Mammary epithelial cell (primary cell): ENCODE measurements at regions of chr15 and their contacts with region 1.

Region 1: GRCh38 chr15:70097337-70098169 is at the start of gene TLE3:
- DNase-seq: peak; percentile 98
- H3K4me3 ChIP-seq: peak within 1 kb of the TSS; percentile 64 to 98 (median 70)
- H3K27ac ChIP-seq: peak within 1 kb of the TSS; percentile 81
- H3K4me1 ChIP-seq: peaks cover 41% of the 10 kb centered on the region
- H3K27me3 ChIP-seq: peaks cover 8% of the 10 kb centered on the region
- CTCF ChIP-seq: peak; percentile 2 to 43
- total RNA-seq, gene TLE3: 27.6 to 32.0 TPM

Region 2: DNA sequence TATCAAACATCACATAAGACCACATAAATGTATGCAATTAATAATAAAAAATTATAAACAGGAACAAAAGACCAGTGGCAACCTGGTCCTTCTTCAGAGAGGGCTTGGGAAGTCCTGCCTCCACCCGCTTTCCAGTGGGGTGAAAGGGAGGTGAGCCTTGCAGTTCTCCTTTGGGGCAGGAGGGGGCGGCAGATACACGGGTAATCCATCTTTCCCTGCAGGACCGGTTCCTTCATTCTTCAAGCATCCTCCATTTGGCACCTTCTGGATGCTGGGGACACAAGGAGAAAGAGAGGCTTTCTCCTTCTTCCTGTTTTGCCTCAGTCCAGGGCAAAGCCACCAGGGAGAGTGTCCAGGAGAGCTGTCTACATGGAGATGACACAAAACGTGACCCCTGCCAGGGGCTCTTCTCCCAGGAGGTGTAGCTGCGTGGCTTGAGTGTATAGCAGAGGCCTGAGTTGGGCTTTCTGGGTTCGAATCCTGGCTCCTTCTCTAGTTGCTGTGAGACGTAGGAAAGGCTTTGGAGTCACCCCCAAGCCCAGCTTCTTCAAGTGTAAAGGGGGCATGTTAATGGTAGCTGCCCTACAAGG is 621.7 kb before region 1 on chr15:
- CTCF ChIA-PET with region 1: no interaction called
- dilution Hi-C with region 1: no loop called
- in situ Hi-C with region 1: no loop called
- intact Hi-C with region 1: loop called (anchors 2 kb)
- DNase-seq: peak; percentile 65
- H3K4me3 ChIP-seq: no peak overlapping the region
- H3K27ac ChIP-seq: no peak overlapping the region
- H3K4me1 ChIP-seq: peaks cover 5% of the 10 kb centered on the region
- H3K27me3 ChIP-seq: no peaks in the 10 kb centered on the region
- CTCF ChIP-seq: peak; percentile 98

Region 3: DNA sequence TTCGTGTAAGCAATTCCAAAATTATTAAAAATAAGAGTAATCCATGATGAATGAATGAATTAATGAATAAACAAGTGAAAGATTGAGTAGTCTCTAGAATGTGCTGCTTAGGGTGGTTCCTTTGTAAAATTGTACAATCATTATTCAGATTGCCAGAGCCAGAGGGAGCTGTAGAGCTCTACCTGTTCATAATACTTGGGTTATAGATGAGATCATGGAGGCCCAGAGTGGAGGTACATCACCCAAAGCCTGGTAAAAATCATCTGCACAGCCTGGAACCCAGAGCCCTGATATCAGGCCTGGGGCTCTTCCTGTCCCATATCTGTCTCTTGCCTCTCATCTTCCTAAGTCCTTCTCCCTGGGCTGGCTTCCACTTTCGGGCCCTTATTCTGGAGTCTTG is 347.8 kb before region 1 on chr15:
- CTCF ChIA-PET with region 1: interaction called, 5 read pairs
- dilution Hi-C with region 1: no loop called
- in situ Hi-C with region 1: no loop called
- intact Hi-C with region 1: loop called (anchors 1 kb)
- DNase-seq: peak; percentile 8
- H3K4me3 ChIP-seq: no peak overlapping the region
- H3K27ac ChIP-seq: no peak overlapping the region
- H3K4me1 ChIP-seq: no peaks in the 10 kb centered on the region
- H3K27me3 ChIP-seq: peaks cover 2% of the 10 kb centered on the region
- CTCF ChIP-seq: peak; percentile 31 to 53

Region 4: GRCh38 chr15:70196314-70197291 is 99.0 kb after region 1 on chr15:
- CTCF ChIA-PET with region 1: no interaction called
- dilution Hi-C with region 1: loop called (anchors 5 kb)
- in situ Hi-C with region 1: no loop called
- intact Hi-C with region 1: loop called (anchors 1 kb)
- DNase-seq: peak; percentile 100
- H3K4me3 ChIP-seq: no peak overlapping the region
- H3K27ac ChIP-seq: peak overlapping the region; percentile 90
- H3K4me1 ChIP-seq: peaks cover 33% of the 10 kb centered on the region
- H3K27me3 ChIP-seq: no peaks in the 10 kb centered on the region
- CTCF ChIP-seq: peak in 1 of 2 donors; percentile 26

Region 5: DNA sequence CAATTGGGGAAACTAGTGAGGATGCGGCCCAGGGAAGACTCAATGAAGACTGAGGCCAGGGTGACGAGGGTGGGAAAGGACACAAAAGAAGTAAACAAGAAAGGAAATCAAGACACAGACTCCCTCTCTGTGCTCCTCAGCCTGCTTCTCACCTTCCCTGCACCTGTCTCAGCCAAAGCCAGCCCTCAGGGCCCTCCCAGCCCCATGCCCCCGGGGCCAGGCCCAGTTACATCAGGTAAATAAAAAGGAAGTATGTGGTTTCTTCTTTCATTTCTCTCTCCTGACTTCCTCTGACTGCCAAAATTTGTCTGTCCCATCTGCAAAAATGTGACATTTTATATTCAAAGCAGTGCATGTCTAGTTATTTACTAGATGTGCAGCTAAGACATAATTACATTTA is 337.8 kb after region 1 on chr15:
- CTCF ChIA-PET with region 1: no interaction called
- dilution Hi-C with region 1: no loop called
- in situ Hi-C with region 1: no loop called
- intact Hi-C with region 1: loop called (anchors 10 kb)
- DNase-seq: no peak
- H3K4me3 ChIP-seq: no peak overlapping the region
- H3K27ac ChIP-seq: no peak overlapping the region
- H3K4me1 ChIP-seq: peaks cover 10% of the 10 kb centered on the region
- H3K27me3 ChIP-seq: no peaks in the 10 kb centered on the region
- CTCF ChIP-seq: no peak

Region 6: DNA sequence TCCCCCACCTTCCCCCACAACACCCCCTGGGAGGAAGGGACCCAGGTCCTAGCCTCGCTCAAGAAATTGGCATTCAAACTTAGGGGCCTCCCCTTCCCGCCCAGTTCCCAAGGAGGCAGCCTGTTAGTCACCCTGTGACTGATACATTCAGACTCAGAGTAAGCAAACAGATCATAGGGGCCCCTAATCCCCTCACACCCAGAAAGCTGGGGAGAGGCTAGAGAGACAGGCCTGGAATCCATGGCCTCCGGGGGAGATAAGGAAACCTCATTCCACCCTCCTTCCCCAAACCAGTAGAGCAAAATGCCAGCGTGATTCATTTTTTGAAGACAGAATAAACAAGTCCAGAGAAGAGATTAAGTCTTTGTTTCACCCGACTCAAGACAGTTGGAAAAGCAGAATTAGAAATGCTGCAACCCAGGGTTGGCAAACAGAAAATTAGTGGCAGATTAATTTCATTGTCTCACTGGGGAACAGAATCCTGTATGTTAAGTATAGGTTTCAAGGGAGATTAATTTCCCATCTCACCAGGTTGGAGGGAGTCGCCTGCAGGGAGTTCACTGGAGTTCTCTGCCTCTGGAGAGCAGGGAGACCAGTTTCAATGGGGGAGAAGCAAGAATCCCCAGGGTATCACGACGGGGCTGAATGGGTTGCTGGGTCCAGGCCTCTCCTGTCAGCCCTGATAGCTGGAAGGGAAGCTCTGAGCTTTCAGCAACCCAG is 397.5 kb after region 1 on chr15:
- CTCF ChIA-PET with region 1: no interaction called
- dilution Hi-C with region 1: loop called (anchors 5 kb)
- in situ Hi-C with region 1: no loop called
- intact Hi-C with region 1: no loop called
- DNase-seq: peak; percentile 94
- H3K4me3 ChIP-seq: no peak overlapping the region
- H3K27ac ChIP-seq: no peak overlapping the region
- H3K4me1 ChIP-seq: peaks cover 45% of the 10 kb centered on the region
- H3K27me3 ChIP-seq: peaks cover 2% of the 10 kb centered on the region
- CTCF ChIP-seq: no peak